Psoas muscle (tissue), 8 donors: ENCODE measurements at regions of chr7 and their contacts with region 1.

Region 1: DNA sequence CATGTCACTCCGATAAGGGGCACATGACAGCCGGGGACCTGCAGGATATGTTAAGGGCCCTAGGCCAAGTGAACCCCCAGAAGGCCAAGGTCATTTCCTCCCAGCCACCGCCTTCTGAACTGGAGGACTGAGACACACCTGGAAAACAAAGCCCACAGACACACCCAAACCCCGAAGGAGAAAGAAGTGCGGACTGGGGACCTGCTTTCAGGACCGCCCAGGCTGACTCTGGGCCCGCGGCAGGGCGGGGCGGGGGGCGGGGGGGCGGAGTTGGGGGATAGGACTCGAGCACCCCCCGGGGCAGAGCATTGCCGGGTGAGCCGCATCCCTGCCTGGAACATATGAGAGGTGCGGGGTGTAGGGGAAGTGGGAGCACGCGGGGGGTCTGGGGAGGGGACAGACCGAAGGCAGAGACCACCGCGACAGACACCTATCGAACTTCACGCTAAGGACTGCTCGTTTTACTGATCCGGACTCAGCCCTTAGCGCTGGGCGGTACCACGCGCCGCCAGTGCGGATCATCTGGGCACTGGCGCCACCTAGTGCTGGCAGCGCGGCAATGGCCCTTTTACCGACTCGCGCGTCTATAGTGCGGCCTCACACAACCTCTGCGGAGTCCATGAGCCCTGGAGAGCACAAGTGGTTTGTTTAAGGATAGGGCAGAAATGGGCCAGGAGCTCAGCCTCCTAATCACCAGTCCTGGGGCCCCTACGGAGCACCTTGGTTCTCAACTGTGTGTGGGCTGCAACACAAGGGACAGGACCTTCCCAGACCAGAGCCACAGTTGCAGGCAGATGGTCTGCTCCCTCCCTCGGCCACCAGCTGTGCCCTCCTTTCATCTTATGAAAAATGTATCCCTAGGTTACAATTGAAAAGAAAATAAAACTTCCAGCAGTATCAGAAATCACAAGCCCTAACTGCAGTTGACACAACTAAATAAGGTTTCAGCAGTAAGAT is 157.6 kb downstream of the HERPUD2 start:
- DNase-seq: peak; percentile 80 to 87
- ATAC-seq: peak; percentile 96 to 99 (median 97)
- H3K4me3 ChIP-seq: peak overlapping the region; percentile 61
- H3K27ac ChIP-seq: no peak overlapping the region
- H3K4me1 ChIP-seq: no peaks in the 10 kb centered on the region
- H3K27me3 ChIP-seq: no peaks in the 10 kb centered on the region
- CTCF ChIP-seq: peak; percentile 92

Region 2: DNA sequence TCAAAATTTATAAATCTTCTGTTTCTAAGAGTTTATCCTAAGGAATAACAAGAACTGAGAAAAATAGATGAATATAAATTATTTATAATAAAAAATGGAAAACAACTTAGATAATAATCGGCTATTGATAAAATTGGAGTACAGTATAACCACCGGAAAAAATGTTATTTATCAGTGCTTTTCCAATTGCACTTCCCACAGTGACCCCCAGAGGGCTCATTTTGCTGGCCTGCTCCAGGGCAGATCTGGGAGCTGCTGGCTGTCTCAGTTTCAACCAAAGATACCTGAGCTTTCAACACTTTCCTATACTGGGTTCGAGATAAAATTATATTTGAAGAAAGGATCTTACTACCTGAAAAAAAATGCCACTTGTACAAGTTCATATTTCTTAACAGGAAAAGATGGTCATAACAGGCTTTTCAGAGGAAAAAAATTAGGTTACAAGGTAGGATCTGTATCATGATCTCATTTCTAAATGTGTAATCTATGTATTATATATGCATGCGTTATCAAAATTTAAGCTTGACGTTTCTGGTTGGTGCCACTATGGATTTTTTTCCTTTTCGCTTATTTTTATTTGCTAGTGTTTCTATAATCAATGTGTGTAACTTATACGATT is 713.6 kb before region 1 on chr7:
- intact Hi-C with region 1: loop called (anchors 5 to 10 kb)
- DNase-seq: peak; percentile 18 to 51
- ATAC-seq: peak in 2 of 4 donors; percentile 42 to 56
- H3K4me3 ChIP-seq: no peak overlapping the region
- H3K27ac ChIP-seq: no peak overlapping the region
- H3K4me1 ChIP-seq: no peaks in the 10 kb centered on the region
- H3K27me3 ChIP-seq: no peaks in the 10 kb centered on the region
- CTCF ChIP-seq: peak; percentile 87

Region 3: DNA sequence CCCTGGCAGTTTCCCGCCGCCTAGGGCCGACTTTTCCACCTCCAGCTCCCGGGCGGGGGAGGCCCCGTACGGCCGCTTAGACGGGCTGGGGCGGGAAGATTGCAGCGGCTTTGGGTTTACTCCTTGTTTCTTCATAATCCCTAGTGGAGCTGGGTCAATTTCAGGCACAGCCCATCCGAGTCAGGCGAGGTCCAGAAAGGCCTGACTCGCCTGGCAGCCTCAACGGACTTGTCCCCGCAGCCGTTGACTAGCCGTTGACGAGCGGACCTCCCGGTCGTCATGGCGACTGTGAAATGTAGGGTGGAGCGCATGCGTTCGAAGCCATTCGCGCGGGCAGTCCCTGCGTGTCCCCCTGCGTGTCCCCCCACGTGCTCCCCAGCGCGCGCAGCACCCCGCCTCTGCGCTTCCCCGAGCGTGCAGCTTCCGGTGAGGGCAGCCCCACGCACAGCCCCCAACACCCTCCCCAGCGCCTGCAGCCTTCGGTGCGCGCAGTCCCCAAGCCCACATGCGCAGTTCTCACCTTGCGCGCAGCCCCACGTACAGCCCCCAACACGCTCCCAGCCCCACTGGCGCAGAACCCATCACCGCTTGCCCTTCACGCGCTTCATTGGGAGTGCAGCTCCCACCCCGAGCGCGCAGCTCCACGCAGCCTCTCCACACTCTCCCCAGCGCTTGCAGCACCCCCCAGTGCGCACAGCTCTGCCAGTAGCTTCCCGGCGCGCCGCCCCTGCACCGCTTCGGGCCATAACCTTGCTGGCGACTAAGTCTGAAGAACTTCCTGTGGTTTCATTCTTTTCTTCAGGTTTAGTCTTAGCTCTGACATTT is 351.2 kb before region 1 on chr7:
- intact Hi-C with region 1: loop called in 1 of 2 experiments (anchors 10 kb)
- DNase-seq: peak; percentile 13 to 51
- ATAC-seq: peak in 2 of 4 donors; percentile 27 to 40
- H3K4me3 ChIP-seq: peak overlapping the region; percentile 59
- H3K27ac ChIP-seq: no peak overlapping the region
- H3K4me1 ChIP-seq: peaks cover 6% of the 10 kb centered on the region
- H3K27me3 ChIP-seq: peaks cover 0 to 26% (median 2%) of the 10 kb centered on the region in 3 donors
- CTCF ChIP-seq: no peak

Region 4: DNA sequence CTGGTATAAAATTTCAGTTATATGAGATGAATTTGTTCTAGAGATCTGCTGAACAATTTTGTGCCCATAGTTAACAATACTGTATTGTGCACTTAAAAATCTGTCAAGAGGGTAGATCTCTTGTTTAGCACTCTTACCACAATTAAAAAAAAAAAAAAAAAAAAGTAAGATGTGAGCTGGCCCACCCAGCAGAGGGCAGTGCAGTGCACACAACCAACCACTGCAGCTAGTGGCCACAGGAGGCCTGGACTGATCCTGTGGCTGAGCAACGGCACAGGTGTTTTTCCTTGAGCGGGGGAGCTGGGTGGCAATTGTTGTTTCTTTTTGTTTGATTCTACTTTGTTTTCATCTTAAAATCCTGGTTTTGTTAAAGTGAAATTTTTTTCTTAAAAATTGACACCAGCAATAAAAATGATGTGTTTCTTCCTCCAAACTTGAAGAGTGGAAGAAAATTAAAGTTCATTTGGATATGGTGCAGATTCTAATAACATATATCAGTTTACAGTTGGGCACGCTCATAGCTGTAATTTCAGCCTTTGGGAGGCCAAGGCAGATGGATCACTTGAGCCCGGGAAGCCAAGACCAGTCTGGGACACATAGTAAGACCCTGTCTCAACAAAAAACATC is 112.4 kb before region 1 on chr7:
- intact Hi-C with region 1: loop called (anchors 5 kb)
- DNase-seq: peak; percentile 35 to 71
- ATAC-seq: peak; percentile 64 to 70 (median 66)
- H3K4me3 ChIP-seq: no peak overlapping the region
- H3K27ac ChIP-seq: no peak overlapping the region
- H3K4me1 ChIP-seq: no peaks in the 10 kb centered on the region
- H3K27me3 ChIP-seq: peaks cover 0 to 3% (median 0%) of the 10 kb centered on the region in 3 donors
- CTCF ChIP-seq: peak; percentile 69

Region 5: DNA sequence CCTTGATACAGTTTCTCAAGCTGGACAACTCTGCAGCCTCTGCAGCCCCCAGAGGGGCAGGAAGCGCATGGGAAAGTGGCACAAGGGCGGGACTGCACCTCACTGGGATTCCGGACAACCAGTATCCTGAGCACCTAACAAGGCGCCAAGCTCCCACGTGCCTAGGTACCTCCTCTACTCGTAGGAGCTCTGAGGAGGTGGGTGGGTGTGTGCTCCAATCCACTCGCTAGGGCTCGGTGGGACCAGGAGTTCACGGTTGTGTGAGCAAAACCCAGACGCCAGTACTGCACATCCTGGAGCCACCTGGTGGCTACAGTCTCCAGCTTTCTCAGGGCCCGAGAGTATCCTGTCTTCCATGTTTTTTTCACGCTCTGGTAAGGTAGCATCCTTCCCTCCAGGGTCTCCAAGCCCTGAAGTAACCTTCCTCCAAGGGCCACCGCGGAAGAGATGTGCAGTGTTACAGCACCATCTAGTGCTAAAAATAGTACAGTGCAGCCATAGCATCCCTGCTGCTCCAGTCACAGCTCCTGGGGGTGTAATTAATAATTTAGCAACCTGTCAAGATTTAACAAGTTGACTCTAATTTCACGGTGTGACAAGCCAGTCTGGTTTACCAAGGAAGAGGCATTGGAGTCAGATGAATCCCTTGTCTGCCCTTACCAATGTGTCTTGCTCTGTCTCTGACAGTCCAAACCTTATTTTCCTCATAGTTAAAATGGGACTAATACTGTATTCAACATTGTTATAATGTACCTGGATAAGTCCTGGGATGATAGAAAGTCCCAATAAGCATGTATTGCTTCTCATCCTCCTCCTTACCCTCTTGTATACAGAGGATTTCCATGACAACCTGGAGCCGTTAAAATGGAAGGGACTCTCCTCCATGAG is 87.2 kb after region 1 on chr7:
- intact Hi-C with region 1: loop called in 1 of 2 experiments (anchors 5 kb)
- DNase-seq: peak in 1 of 2 donors; percentile 17
- ATAC-seq: peak; percentile 65 to 94 (median 82)
- H3K4me3 ChIP-seq: no peak overlapping the region
- H3K27ac ChIP-seq: no peak overlapping the region
- H3K4me1 ChIP-seq: no peaks in the 10 kb centered on the region
- H3K27me3 ChIP-seq: no peaks in the 10 kb centered on the region
- CTCF ChIP-seq: peak; percentile 79

Region 6: DNA sequence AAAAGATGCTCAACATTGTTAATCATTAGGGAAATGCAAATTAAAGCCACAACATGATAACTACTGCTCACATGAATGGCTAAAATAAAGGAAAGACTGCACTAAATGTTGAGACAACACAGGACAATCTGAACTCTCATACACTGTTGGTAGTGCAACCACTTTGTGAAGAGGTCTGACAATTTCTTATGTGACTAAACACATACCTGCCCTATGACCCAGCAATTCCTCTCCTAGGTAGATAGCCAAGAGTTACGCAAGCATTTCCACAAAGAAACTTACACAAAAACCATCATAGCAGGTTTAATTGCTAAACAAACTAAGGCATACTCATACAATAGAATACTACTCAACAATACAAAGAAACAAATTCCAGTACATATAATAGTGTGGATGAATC is 199.4 kb after region 1 on chr7:
- intact Hi-C with region 1: no loop called
- DNase-seq: no peak
- ATAC-seq: no peak
- H3K4me3 ChIP-seq: no peak overlapping the region
- H3K27ac ChIP-seq: no peak overlapping the region
- H3K4me1 ChIP-seq: peaks cover 9% of the 10 kb centered on the region
- H3K27me3 ChIP-seq: no peaks in the 10 kb centered on the region
- CTCF ChIP-seq: no peak